Right ventricle myocardium inferior (tissue), 1 donor: ENCODE measurements at regions of chr12 and their contacts with region 1.

Region 1: DNA sequence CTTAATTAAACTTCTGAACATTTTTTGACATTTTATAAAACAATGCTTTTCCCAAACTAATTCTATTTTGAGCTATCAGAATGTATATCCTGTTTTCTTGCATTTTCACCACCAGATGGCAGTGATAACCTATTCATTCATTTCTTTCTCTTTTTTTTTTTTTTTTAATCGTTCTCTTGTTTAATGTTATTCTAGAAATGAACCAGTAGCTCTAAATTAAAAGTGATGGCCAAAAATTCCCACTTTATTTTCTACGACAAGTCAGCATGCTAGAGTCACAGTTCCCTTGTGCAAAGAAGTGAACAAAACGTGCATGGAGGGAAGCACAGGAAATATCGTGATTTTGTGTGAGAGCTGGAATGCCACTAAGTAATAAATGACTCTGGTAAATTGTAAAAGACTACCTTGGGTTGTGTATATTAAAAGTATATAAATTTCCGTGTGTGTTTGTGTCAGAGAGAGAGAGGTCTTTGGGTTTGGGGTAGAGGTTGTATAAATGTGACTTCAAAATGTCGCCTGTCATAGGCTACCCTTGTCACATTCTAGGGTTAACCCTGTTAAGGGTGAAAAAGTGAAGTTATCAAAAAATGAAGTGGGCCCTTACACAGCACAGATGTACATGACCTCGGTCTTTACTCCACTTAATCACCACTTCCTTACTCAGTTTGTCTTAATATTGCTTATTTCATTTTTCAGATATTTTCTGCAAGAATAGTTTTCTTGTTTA is 40.4 kb upstream of the LDHB start:
- DNase-seq: no peak
- ATAC-seq: no peak

Region 2: GRCh38 chr12:21843795-21844194 is 145.7 kb after region 1 on chr12:
- intact Hi-C with region 1: no loop called
- DNase-seq: no peak
- ATAC-seq: no peak

Region 3: GRCh38 chr12:21989819-21990412 is 291.8 kb after region 1 on chr12:
- intact Hi-C with region 1: loop called (anchors 2 kb)
- DNase-seq: no peak
- ATAC-seq: no peak

Region 4: DNA sequence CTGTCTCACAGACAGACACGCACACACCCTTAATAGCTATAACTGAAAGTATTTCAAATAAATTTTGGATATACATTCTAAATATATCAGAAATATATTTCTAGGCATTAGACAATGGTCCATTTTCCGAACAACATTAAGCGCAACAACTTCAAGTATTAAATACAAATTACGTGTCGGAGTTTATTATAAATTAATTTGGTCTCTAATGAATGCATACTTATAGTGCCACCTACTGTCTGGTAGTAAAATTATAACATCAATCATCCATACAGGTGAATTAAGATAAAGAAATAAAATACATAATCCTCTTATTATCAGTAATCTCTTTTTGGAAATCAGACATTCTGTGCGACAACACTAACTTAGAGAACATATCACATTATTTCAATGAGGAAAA is 320.8 kb after region 1 on chr12:
- intact Hi-C with region 1: loop called (anchors 2 kb)
- DNase-seq: no peak
- ATAC-seq: no peak

Region 5: DNA sequence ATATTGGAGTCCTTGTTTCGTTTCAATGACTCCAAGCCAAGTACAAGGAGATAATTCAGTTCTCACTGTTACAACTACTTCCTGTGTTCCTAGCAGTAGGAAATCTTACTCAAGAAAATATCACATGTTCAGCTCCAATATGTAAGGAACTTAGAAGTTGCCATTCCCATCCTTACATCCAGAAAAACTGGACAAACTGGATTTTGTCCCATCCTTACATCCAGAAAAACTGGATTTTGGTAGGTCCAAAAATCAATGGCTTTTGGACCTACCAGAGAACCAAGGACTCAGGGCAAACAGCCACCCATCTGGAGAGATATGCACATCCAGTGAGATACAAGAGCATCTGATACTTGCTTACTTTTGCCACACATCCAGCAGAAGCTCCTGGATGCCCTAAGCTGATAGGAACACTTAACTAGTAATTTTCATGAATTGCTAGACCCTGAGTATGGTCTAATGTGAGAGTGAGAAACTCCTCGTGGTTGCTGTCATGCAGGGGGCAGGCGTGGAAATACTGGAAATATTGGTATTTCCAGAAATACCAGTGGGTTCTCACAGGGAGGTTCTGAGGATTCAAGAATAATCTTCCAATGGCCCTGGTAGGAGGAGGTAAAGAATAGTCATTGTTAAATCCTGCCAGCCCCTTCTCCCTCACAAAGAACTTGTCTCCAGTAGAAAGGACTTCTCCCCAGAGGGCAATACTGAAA is 371.9 kb after region 1 on chr12:
- intact Hi-C with region 1: no loop called
- DNase-seq: no peak
- ATAC-seq: no peak